ENCODE measurements at regions of chr6 and their contacts with region 1.

Region 1: GRCh38 chr6:3052481-3053230 is 15.6 kb upstream of the RIPK1 start:
- DNase-seq: no peak
- ATAC-seq: no peak
- H3K4me3 ChIP-seq: no peak overlapping the region
- H3K27ac ChIP-seq: no peak overlapping the region
- H3K4me1 ChIP-seq: no peaks in the 10 kb centered on the region
- H3K27me3 ChIP-seq: peaks cover 2 to 3% of the 10 kb centered on the region in 2 experiments; a peak in 3 of 4 replicates
- CTCF ChIP-seq: no peak
- EP300 ChIP-seq: no peak
- POLR2A ChIP-seq: no peak
- RAD21 ChIP-seq: no peak

Region 2: GRCh38 chr6:2416128-2416712 is 636.4 kb before region 1 on chr6:
- CTCF ChIA-PET with region 1: no interaction called
- POLR2A ChIA-PET with region 1: no interaction called
- RAD21 ChIA-PET with region 1: no interaction called
- SMC1A ChIA-PET with region 1: no interaction called
- in situ Hi-C with region 1: no loop called
- intact Hi-C with region 1: no loop called
- DNase-seq: no peak
- ATAC-seq: no peak
- H3K4me3 ChIP-seq: no peak overlapping the region
- H3K27ac ChIP-seq: no peak overlapping the region
- H3K4me1 ChIP-seq: no peaks in the 10 kb centered on the region
- H3K27me3 ChIP-seq: no peaks in the 10 kb centered on the region
- CTCF ChIP-seq: no peak
- EP300 ChIP-seq: no peak
- POLR2A ChIP-seq: no peak
- RAD21 ChIP-seq: no peak

Region 3: DNA sequence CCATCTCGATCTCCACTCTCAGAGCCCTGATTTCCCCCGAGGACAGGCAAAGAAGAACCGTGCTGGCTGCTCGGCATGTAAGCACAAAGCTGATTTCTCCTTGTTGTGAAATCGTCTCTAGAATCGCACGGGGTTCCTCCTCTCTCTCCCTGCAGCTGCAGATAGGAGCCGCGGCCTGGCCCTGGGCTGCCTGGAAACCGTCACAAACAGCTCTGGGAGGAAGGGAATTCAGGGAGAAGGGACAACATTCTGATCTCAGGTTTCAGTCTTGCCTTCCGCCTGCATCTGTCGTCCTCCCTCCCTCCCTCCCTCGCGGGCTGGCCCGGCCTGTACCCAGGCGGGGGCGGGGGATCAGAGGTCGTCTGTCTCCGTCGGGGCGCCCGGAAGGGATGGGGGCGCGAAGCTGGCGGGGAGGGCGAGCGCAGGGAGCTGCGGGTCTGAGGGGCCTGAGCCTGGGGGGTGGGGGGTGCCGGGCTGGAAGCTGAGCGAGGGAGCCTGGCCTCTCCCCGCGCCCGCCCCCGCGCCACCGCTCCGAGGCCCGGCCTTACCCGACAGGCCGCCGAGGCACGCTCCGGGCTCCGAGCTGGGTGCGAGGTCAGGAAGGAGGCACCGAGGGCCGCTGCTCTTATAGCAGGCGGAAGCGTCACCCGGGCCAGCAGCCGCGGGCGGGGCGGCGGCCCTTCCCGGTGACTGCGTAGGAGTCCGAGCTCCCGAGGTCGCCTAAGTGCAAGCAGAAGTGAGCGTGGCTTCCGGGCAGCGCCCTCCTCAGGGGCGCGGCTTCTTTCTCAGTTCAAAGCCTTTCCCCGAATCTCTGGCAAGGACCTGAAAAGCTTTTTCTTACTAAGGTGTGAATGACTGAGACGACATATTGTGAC is 211.2 kb before region 1 on chr6 and contains the start of gene SERPINB1:
- CTCF ChIA-PET with region 1: interaction called, 3 read pairs
- POLR2A ChIA-PET with region 1: no interaction called
- RAD21 ChIA-PET with region 1: interaction called, 3 read pairs
- SMC1A ChIA-PET with region 1: no interaction called
- in situ Hi-C with region 1: loop called (anchors 10 kb)
- intact Hi-C with region 1: loop called (anchors 10 kb)
- DNase-seq: no peak
- ATAC-seq: peak; percentile 76
- H3K4me3 ChIP-seq: no peak within 1 kb of the TSS; the same call in 1 of the 2 replicates
- H3K27ac ChIP-seq: no peak within 1 kb of the TSS
- H3K4me1 ChIP-seq: peaks cover 4% of the 10 kb centered on the region; the same call in 1 of the 2 replicates
- H3K27me3 ChIP-seq: peaks cover 0 to 5% of the 10 kb centered on the region in 2 experiments; a peak in 3 of 4 replicates
- CTCF ChIP-seq: 0 out of 6 replicates have a peak, but pooled peaks of 1 of the 3 experiments have one; percentile 0
- EP300 ChIP-seq: no peak
- POLR2A ChIP-seq: peak; percentile 51; the same call in 1 of the 2 replicates
- RAD21 ChIP-seq: no peak
- polyA plus RNA-seq, gene SERPINB1: 0.82 to 1.8 TPM

Region 4: GRCh38 chr6:2942914-2943571 is 109.6 kb before region 1 on chr6:
- CTCF ChIA-PET with region 1: no interaction called
- POLR2A ChIA-PET with region 1: no interaction called
- RAD21 ChIA-PET with region 1: no interaction called
- SMC1A ChIA-PET with region 1: no interaction called
- in situ Hi-C with region 1: no loop called
- intact Hi-C with region 1: no loop called
- DNase-seq: no peak
- ATAC-seq: no peak
- H3K4me3 ChIP-seq: 0 out of 2 replicates have a peak overlapping the region, but pooled peaks have one; percentile 19
- H3K27ac ChIP-seq: no peak overlapping the region
- H3K4me1 ChIP-seq: peaks cover 35% of the 10 kb centered on the region
- H3K27me3 ChIP-seq: peaks cover 2 to 12% of the 10 kb centered on the region in 2 experiments
- CTCF ChIP-seq: no peak
- EP300 ChIP-seq: no peak
- POLR2A ChIP-seq: no peak
- RAD21 ChIP-seq: no peak

Region 5: DNA sequence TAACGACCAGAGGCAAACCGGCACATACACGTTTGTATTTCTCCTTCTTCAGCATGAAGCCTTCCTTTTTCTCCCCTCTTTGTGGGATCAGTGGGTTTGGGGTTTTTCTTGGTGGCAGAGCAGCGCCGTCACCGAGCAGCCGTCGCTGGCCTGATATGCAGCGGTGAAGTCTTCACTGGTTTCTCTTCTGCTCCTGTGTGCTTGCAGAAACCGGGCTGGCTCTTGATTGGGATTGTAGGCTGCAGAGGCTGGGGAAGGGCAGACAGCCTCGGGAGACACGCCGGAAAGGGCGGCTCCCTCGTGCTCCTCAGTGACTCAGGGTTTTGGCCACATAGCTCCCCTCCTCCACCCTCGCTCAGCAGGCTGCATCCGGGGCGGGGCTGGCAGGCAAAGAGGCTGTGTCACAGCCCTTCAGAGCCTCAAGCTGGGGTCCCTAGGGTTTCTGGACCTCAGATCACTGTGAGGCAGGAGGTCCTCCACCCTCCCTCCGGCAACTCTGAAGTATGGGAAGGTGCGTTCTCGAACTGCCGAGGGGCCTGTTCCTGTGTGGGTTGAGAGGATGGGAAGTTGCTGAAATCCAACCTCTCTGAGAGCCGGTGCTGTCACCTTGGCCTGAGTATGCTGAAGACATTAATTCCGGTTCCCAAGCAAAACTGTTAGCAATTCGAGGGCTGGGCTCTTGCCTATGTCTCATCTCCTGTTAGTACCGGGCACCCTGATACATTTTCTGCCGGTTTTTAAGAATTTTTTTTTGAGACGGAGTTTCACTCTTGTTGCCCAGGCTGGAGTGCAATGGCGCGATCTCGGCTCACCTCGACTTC is 28.8 kb before region 1 on chr6:
- CTCF ChIA-PET with region 1: interaction called, 4 read pairs
- POLR2A ChIA-PET with region 1: interaction called, 3 read pairs
- RAD21 ChIA-PET with region 1: interaction called, 3 read pairs
- SMC1A ChIA-PET with region 1: interaction called, 3 read pairs
- in situ Hi-C with region 1: no loop called
- intact Hi-C with region 1: loop called (anchors 2 kb)
- DNase-seq: peak; percentile 63
- ATAC-seq: peak; percentile 90
- H3K4me3 ChIP-seq: peak overlapping the region; percentile 71
- H3K27ac ChIP-seq: peak overlapping the region; percentile 88
- H3K4me1 ChIP-seq: peaks cover 40% of the 10 kb centered on the region
- H3K27me3 ChIP-seq: no peaks in the 10 kb centered on the region
- CTCF ChIP-seq: no peak
- EP300 ChIP-seq: peak in 1 of 2 experiments; percentile 54; a peak in 1 of 4 replicates
- POLR2A ChIP-seq: peak; percentile 73
- RAD21 ChIP-seq: no peak

Region 6: DNA sequence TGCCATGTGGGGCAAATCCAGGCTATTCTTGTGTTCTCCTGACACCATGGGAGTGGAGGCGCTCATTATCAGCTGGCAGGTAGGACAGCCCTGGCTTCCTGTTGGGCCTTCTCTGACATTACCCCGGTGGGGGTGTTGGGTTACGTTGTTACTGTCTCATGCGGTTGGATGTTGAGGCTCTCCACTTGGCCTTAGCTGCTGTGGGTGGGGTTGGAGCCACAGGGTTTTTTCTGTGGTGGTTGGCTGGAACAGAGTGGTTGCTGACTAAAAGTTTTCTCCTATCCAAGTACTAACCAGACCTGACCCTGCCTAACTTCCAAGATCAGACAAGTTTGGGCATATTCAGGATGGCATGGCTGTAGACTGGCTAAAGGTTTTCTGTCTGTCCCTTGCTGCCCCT is 35.8 kb after region 1 on chr6:
- CTCF ChIA-PET with region 1: no interaction called
- POLR2A ChIA-PET with region 1: no interaction called
- RAD21 ChIA-PET with region 1: no interaction called
- SMC1A ChIA-PET with region 1: no interaction called
- in situ Hi-C with region 1: no loop called
- intact Hi-C with region 1: no loop called
- DNase-seq: no peak
- ATAC-seq: no peak
- H3K4me3 ChIP-seq: no peak overlapping the region
- H3K27ac ChIP-seq: no peak overlapping the region
- H3K4me1 ChIP-seq: no peaks in the 10 kb centered on the region
- H3K27me3 ChIP-seq: no peaks in the 10 kb centered on the region
- CTCF ChIP-seq: no peak
- EP300 ChIP-seq: no peak
- POLR2A ChIP-seq: no peak
- RAD21 ChIP-seq: no peak